ENCODE measurements at regions of chr5 and their contacts with region 1.

Region 1: DNA sequence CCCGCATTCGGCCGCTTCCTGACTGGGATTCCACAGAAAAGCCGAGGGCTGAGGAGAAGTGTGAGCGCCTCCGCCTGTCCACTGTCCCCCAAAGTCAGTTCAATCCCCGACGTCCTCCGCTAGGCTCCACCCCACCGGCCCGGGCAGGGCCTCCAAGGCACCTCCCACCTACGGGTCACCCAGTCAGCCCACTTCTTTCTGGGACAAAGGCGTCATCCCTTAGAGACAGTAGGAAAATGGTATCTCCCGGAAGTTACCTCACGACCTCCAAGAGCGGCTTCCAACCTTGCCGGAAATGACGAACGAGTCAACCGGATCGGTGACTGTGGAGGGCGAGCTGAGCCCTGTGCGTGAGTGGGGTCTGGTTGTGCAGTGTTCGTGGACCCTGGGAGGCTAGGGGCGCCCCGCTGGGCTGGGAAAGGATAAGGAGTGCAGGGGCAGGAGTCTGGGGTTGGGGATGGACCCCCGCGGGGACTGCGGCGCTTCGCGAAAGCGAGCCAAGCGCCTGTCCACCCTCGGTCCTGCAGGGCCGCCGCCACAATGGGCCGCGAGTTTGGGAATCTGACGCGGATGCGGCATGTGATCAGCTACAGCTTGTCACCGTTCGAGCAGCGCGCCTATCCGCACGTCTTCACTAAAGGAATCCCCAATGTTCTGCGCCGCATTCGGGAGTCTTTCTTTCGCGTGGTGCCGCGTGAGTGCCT is at the starts of genes GDF9 and UQCRQ:
- DNase-seq: peak; percentile 97
- H3K4me3 Mint-ChIP-seq: peak within 1 kb of the TSS; percentile 96
- H3K27ac Mint-ChIP-seq: peak within 1 kb of the TSS; percentile 100
- H3K4me1 Mint-ChIP-seq: peaks cover 29% of the 10 kb centered on the region
- H3K27me3 Mint-ChIP-seq: peaks cover 5% of the 10 kb centered on the region
- total RNA-seq, gene GDF9: 0.87 to 0.89 TPM
- total RNA-seq, gene UQCRQ: 304 to 328 TPM

Region 2: DNA sequence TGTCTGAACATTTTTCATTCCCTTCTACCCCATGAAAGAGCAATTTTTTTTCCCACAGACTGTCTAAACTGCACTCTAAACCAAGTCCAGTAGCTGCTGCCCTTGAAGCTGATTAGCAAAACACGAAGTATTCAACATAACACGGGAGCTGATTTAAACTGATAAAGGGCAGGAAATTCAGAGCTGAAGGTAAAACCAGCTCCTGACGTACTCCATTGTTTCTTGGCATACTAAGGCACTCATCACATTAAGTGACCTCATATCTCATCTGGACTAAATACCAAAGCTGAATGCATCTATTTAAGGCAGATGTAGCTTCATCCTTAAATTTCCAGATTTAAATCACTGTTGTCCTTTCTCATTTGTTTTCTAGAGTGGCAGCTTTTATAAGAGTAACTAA is 12.2 kb before region 1 on chr5:
- CTCF ChIA-PET with region 1: interaction called, 24 read pairs
- POLR2A ChIA-PET with region 1: no interaction called
- DNase-seq: no peak
- H3K4me3 Mint-ChIP-seq: no peak overlapping the region
- H3K27ac Mint-ChIP-seq: no peak overlapping the region
- H3K4me1 Mint-ChIP-seq: peaks cover 4% of the 10 kb centered on the region
- H3K27me3 Mint-ChIP-seq: peaks cover 4% of the 10 kb centered on the region